Endothelial cell of umbilical vein (primary cell): ENCODE measurements at regions of chr1 and their contacts with region 1.

Region 1: DNA sequence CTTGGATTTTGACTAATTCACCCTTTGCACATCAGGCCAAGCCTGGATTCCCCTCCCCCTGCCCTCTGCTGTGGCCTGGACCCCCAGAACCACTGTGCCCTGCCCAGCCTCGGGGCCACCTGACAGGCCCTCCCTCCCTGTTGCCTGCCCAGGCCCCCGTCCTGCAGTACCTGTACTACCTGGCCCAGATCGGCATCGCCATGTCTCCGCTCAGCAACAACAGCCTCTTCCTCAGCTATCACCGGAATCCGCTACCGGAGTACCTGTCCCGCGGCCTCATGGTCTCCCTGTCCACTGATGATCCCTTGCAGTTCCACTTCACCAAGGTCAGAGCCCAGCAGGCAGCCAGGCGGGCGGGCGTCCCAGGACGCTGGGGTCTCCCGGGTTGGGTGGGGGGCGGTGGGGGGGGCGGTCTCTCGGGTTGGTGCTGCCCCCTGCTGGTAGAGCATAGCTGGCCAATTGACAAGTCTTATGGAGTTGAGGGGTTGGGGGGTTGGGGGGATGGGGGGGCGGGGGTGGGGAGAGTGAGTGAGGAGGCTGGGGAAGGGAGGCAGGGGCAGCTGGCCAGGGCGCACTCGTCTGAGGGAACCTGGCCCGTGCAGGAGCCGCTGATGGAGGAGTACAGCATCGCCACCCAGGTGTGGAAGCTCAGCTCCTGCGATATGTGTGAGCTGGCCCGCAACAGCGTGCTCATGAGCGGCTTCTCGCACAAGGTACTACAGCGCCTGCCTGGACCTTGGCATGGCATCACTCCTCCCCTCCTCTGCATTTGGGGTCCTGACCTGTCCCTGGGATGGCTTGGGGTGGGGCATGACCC is 10.7 kb downstream of the AMPD2 start:
- DNase-seq: no peak
- H3K4me3 ChIP-seq: no peak overlapping the region
- H3K27ac ChIP-seq: no peak overlapping the region
- H3K4me1 ChIP-seq: no peaks in the 10 kb centered on the region
- H3K27me3 ChIP-seq: no peaks in the 10 kb centered on the region
- CTCF ChIP-seq: peak in 1 of 2 donors; percentile 26
- POLR2A ChIP-seq: no peak

Region 2: DNA sequence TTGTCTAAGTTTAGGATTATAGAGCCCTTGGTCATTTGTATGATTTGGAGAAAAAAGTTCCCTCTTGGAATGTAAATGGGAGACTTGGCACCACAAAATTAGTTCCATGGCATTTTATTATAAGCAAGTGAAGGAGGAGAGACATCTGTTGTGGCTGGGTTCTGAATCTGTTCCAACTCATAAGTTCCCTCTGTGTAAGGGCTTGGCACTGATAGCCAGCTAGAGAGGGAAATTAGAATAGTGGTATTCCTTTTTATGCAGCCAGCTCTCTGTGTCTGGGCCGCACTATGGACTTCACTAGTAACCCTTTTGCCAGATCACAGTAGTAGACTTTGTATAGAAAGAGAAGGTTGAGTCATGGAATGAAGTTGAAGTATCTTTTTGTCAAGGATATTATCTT is 50.8 kb before region 1 on chr1:
- CTCF ChIA-PET with region 1: interaction called, 11 read pairs
- POLR2A ChIA-PET with region 1: no interaction called
- dilution Hi-C with region 1: no loop called
- intact Hi-C with region 1: no loop called
- DNase-seq: no peak
- H3K4me3 ChIP-seq: no peak overlapping the region
- H3K27ac ChIP-seq: no peak overlapping the region
- H3K4me1 ChIP-seq: peaks cover 20% of the 10 kb centered on the region
- H3K27me3 ChIP-seq: no peaks in the 10 kb centered on the region
- CTCF ChIP-seq: no peak
- POLR2A ChIP-seq: no peak

Region 3: GRCh38 chr1:109598655-109599054 is 31.6 kb before region 1 on chr1:
- CTCF ChIA-PET with region 1: interaction called, 13 read pairs
- POLR2A ChIA-PET with region 1: no interaction called
- dilution Hi-C with region 1: no loop called
- intact Hi-C with region 1: no loop called
- DNase-seq: no peak
- H3K4me3 ChIP-seq: no peak overlapping the region
- H3K27ac ChIP-seq: no peak overlapping the region
- H3K4me1 ChIP-seq: peaks cover 15% of the 10 kb centered on the region
- H3K27me3 ChIP-seq: no peaks in the 10 kb centered on the region
- CTCF ChIP-seq: peak in 1 of 2 donors; percentile 20
- POLR2A ChIP-seq: no peak

Region 4: GRCh38 chr1:109613361-109614147 is 16.7 kb before region 1 on chr1:
- CTCF ChIA-PET with region 1: interaction called, 17 read pairs
- POLR2A ChIA-PET with region 1: no interaction called
- dilution Hi-C with region 1: no loop called
- intact Hi-C with region 1: no loop called
- DNase-seq: peak; percentile 68
- H3K4me3 ChIP-seq: no peak overlapping the region
- H3K27ac ChIP-seq: peak overlapping the region; percentile 30
- H3K4me1 ChIP-seq: peaks cover 51% of the 10 kb centered on the region
- H3K27me3 ChIP-seq: no peaks in the 10 kb centered on the region
- CTCF ChIP-seq: no peak
- POLR2A ChIP-seq: no peak